ENCODE measurements at regions of chr14 and their contacts with region 1.

Region 1: GRCh38 chr14:104175041-104175440 is 36.7 kb downstream of the KIF26A start:
- DNase-seq: no peak
- ATAC-seq: no peak
- H3K4me3 Mint-ChIP-seq: no peak overlapping the region
- H3K27ac Mint-ChIP-seq: no peak overlapping the region
- H3K4me1 Mint-ChIP-seq: no peaks in the 10 kb centered on the region
- H3K27me3 Mint-ChIP-seq: no peaks in the 10 kb centered on the region

Region 2: GRCh38 chr14:104113631-104114435 is 61.2 kb before region 1 on chr14:
- CTCF ChIA-PET with region 1: no interaction called
- POLR2A ChIA-PET with region 1: no interaction called
- intact Hi-C with region 1: loop called in 1 of 2 experiments (anchors 2 kb)
- DNase-seq: peak; percentile 2
- ATAC-seq: no peak
- H3K4me3 Mint-ChIP-seq: no peak overlapping the region
- H3K27ac Mint-ChIP-seq: no peak overlapping the region
- H3K4me1 Mint-ChIP-seq: no peaks in the 10 kb centered on the region
- H3K27me3 Mint-ChIP-seq: peaks cover 16% of the 10 kb centered on the region

Measured in activated CD4-positive, alpha-beta T cell treated with anti-CD3 and anti-CD28 coated beads for 36 hours (primary cell).